Sciatic nerve (tissue), 2 donors: ENCODE measurements at regions of chr17 and their contacts with region 1.

Region 1: DNA sequence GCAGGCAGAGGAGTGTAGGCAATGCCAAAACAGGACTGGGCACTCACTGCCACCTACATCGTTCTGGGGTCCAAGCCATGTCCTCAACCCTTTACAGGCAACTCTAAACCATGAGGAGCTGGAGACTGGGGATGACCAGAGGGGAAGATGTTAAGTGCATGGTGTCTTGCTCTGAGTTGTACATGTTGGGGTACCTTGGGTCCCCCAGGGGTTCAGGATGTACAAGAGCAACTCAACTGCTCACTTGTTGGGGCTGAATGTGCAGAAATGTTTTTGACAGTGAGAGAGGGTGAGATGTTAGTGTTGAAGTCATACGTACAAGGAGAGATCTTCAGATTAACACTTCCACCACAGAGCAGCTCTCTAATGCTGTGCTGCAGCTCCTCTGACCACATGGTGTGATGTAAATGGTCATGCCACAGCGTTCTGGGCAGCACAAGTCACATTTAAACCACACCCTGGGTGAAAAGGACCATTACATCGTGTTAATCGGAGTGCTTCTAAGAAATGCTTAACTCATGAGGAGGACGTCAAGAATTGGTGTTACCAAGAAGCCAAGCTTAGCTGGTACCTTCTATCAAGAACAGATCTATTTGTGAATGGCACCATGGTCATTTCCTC is 2.4 kb downstream of the CCL18 start:
- DNase-seq: no peak
- ATAC-seq: peak; percentile 39

Region 2: DNA sequence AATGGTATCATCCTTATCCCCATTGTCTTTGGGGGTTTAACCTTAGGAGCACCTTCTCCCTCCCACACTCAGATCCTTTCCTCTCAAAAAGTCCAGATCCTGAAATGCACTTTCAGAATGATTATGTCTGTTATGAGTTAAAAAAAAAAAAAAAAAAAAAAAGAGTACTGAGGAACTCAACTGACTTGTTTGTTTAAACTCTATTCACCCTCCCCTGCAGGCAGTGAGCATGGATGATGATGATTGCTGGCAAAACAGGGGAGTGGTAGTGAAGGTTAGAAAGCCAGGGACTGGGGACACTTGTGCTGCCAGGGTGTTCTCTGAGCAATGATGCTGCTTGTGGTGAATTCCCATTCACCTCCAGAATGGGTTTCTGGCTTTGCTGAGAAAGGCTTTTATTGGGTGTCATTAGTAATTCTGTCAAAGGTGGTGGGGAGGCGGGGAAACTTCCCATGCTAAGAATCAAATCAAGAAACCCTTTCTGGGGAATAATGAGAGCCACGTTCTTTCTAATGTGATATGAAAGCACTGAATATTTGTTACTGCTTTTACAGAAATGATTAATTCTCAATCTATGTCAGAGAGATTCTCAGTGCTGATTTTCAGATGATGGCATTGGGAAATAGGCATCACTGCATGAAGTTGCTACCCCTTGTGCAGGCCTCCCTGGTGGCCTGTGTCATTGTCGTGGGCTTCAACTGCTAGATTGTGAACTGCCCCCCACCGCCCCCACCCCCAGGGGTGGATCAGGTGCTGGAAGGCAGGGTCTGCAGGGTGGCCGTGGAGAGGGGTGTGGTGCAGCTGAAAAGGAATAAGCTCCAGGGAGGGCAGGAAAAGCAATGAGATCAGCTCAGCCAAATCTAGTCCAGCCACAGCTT is 51.3 kb after region 1 on chr17:
- intact Hi-C with region 1: loop called (anchors 5 kb)
- DNase-seq: no peak
- ATAC-seq: no peak

Region 3: DNA sequence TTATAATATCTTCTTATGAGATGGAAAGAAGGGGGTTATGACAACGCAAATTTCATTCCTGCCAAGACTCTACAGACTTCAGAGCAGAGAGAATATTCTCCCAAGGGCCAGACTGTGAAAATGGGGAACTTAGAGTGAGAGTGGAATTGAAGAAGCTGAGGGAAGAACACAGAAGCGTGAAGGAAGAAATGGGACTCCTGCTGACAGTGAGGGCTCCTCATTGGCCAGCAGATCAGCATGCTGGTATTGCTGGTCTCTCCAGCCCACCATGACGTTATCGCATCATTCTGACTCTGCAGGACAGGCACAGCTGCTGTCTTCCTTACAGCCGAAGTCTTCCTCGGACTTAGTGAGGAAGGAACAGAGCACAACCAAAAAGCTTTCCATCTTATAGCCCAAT is 61.4 kb after region 1 on chr17:
- intact Hi-C with region 1: no loop called
- DNase-seq: no peak
- ATAC-seq: no peak